ENCODE measurements at regions of chr20 and their contacts with region 1.

Region 1: GRCh38 chr20:21513881-21514540 is at the start of gene NKX2-2:
- DNase-seq: peak; percentile 94
- H3K4me3 ChIP-seq: peak within 1 kb of the TSS; percentile 84
- H3K27ac ChIP-seq: peak within 1 kb of the TSS; percentile 94
- H3K4me1 ChIP-seq: peaks cover 10% of the 10 kb centered on the region
- H3K27me3 ChIP-seq: no peaks in the 10 kb centered on the region
- CTCF ChIP-seq: no peak
- total RNA-seq, gene NKX2-2: 78.8 and 85.1 TPM in 2 replicates

Region 2: DNA sequence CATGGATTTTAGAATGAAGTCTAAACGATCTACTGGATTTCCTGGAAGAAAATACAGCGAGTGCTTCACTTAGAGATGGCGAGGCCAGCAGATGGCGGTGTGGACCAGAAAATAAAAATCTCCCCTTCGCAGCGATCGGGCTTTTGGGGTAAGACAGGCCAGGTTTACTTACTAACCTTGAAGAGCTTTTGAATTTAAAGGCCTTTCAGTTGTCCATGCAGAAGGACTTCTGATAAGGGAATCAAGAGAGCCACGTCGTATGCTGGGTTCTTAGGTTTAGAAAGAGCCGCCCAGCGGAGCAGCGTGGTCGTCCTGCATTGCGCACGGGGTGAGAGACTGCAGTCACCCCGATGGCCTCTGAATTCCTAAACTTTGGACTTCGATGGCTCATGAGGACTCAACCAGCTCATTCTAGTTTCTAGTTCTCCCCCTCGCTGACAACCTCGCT is 676.4 kb before region 1 on chr20:
- CTCF ChIA-PET with region 1: interaction called, 7 read pairs
- POLR2A ChIA-PET with region 1: interaction called, 11 read pairs
- intact Hi-C with region 1: loop called (anchors 5 kb)
- DNase-seq: peak; percentile 82
- H3K4me3 ChIP-seq: no peak overlapping the region
- H3K27ac ChIP-seq: no peak overlapping the region
- H3K4me1 ChIP-seq: no peaks in the 10 kb centered on the region
- H3K27me3 ChIP-seq: no peaks in the 10 kb centered on the region
- CTCF ChIP-seq: peak; percentile 88